ENCODE measurements at regions of chr12 and their contacts with region 1.

Region 1: DNA sequence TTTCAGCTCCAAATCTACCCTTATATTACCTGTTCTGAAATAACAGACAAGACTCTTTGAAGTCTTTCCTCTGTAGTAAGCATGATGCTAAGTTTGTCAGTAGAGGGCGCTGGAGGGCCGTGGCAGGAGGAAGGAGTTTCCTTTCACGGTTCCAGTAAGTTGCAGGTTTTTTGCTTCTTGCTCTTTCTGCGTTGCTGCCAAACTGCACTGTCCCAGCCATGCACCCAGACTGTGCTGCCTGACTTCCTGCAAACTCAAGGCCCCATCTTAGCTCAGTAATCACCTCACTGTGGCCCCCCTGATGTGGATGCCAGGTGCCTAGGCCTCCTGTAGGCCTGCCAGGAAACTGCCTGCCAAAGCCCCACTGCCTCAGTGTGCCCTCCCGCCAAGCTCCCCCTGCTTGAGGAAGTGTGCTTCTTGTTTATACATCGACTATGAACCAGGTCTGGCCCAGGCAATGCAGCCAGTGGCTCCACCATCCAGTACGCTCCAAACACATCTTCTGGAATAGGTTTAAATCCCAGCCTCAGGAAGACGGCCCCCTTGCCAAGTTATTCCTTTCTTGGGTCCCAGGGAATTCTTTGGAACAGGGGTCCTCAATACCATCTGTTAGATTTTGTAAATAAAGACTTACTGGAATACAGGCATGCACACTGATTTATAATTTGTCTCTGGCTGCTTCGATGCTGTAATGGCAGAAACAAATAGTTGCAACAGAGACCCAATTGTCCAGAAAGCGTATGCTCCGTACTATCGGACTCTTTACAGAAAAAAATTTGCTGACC is 193.7 kb upstream of the LRIG3 start:
- DNase-seq: peak; percentile 85
- ATAC-seq: peak; percentile 85
- H3K4me3 Mint-ChIP-seq: peak overlapping the region; percentile 22
- H3K27ac Mint-ChIP-seq: no peak overlapping the region
- H3K4me1 Mint-ChIP-seq: peaks cover 7% of the 10 kb centered on the region
- H3K27me3 Mint-ChIP-seq: no peaks in the 10 kb centered on the region
- CTCF ChIP-seq: peak; percentile 87

Region 2: DNA sequence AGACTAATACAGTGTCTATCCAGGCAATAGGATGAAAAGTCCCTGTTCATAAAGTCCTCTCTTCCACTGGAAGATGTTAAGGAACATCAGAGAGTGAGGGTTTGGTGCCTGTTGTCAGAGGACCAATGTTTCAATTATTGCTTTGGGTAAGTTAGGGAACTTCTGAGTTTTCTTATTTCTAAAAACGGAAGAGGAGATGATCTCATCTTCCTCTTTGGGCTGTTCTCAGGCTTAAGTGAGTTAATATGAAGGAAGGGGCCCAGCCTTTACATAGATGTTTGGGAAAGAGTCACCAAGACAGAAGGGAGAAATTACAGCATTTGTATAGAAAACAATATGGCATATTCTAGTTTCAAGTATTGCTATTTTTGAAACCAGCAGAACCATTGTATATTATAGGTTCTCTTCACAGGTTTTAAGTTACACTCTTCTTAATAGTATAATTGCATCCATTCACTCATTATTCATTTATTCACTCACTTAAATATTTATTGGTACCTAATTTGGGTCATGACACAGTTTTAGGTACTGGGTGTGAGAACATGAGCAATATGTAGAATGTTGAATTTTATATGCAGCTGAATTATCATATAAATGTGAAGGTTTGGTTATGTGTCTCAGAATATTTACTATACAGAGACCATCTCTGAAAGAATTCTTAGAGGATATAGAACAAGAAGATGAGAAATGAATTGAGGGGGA is 125.2 kb before region 1 on chr12:
- CTCF ChIA-PET with region 1: no interaction called
- POLR2A ChIA-PET with region 1: no interaction called
- DNase-seq: no peak
- ATAC-seq: no peak
- H3K4me3 Mint-ChIP-seq: no peak overlapping the region
- H3K27ac Mint-ChIP-seq: no peak overlapping the region
- H3K4me1 Mint-ChIP-seq: no peaks in the 10 kb centered on the region
- H3K27me3 Mint-ChIP-seq: no peaks in the 10 kb centered on the region
- CTCF ChIP-seq: no peak

Region 3: DNA sequence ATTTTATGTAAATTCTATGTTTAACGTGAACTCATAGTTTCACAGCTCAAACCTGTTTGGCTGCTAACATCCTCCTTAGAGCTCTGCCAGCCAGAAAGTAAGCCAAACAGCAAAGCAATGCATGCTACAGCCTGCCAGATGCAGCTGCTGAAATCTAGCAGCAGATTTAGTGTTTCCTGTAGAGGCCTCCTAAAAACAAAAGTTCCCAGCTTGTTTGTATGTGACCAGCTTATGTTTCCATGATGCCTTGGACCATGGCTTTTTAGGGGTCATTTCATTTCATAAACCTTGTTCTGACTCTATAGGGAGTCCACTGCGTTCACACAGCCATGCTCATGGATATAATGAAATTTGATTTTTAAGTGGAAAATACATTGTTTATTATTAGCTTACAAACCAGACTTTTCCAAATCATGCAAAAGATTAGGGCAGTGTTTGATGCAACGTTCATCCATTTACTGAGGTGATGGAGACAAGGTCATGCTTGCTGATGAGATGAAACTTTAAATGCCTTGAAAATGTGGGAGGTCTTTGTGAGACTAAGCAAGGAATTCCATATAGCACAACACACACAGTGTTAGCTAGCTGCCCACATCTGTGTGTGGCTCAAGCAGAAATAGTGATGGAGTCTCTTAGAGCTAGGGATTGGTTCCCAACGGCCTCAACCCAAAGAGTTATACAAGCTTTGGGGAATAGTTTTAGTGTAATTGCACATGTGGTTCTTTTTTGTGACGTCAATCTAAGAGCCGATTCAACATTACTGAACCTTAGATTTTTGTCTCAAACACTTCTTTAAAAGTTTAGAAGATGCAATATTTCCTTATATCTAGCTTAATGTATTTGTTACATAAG is 36.2 kb before region 1 on chr12:
- CTCF ChIA-PET with region 1: interaction called, 12 read pairs
- POLR2A ChIA-PET with region 1: no interaction called
- DNase-seq: no peak
- ATAC-seq: no peak
- H3K4me3 Mint-ChIP-seq: no peak overlapping the region
- H3K27ac Mint-ChIP-seq: no peak overlapping the region
- H3K4me1 Mint-ChIP-seq: no peaks in the 10 kb centered on the region
- H3K27me3 Mint-ChIP-seq: no peaks in the 10 kb centered on the region
- CTCF ChIP-seq: no peak

Region 4: GRCh38 chr12:59149997-59150642 is 36.1 kb after region 1 on chr12:
- CTCF ChIA-PET with region 1: interaction called, 42 read pairs
- POLR2A ChIA-PET with region 1: no interaction called
- DNase-seq: no peak
- ATAC-seq: peak; percentile 94
- H3K4me3 Mint-ChIP-seq: no peak overlapping the region
- H3K27ac Mint-ChIP-seq: no peak overlapping the region
- H3K4me1 Mint-ChIP-seq: peaks cover 9% of the 10 kb centered on the region
- H3K27me3 Mint-ChIP-seq: no peaks in the 10 kb centered on the region
- CTCF ChIP-seq: peak; percentile 73

Region 5: DNA sequence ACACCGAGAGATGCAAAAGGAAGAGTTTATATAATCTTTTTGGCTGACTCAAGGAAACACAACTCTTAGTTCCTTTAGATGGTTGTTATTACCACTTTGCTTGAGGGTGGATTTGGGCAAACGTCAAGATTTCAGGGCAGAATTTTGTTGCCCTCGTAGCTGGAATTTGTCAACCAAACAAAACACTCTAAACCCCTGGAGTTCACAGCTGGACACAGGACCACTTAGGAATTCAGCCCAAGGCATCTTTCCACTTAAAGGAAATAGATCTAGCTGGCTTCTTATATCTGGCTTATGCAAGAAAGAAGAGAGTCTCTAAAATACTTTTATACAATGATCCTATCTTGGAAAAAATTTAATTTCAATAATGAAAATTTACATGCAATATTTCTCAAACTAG is 44.0 kb after region 1 on chr12:
- CTCF ChIA-PET with region 1: interaction called, 42 read pairs
- POLR2A ChIA-PET with region 1: no interaction called
- DNase-seq: no peak
- ATAC-seq: peak; percentile 38; the same call in 1 of the 2 replicates
- H3K4me3 Mint-ChIP-seq: no peak overlapping the region
- H3K27ac Mint-ChIP-seq: no peak overlapping the region
- H3K4me1 Mint-ChIP-seq: peaks cover 12% of the 10 kb centered on the region
- H3K27me3 Mint-ChIP-seq: no peaks in the 10 kb centered on the region
- CTCF ChIP-seq: no peak

Region 6: DNA sequence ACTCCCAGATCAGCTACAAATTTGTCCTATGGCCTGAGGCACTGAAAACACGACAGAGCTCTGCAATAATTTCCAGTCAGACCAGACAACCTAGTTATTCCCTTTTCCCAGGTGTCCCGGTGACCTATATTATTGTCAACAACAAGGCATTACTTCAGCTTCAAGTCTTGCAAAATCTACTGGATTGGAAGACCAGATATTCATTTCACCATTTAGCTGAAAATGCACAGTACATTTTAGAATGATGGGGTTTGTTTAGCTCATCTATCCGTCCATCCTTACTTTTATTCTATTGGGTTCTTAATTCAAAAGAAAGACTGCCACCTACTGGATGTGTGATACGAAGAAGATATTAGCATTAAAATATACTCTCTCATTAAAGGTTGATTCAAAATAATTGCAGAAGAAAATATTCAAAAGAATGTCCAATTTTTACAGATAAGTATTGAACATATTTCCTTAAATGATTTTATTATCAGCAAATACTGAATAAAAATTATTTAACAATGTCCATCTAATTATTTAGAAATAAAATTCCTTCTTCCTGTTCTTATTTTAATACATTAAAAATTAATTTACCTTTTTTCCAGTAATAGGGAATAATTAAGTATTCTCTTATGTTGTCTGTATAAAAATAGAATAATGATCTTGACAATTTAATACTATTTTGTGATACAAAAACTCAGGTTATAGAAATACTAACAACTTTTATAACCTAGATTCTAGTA is 51.1 kb after region 1 on chr12:
- CTCF ChIA-PET with region 1: interaction called, 18 read pairs
- POLR2A ChIA-PET with region 1: no interaction called
- DNase-seq: no peak
- ATAC-seq: no peak
- H3K4me3 Mint-ChIP-seq: no peak overlapping the region
- H3K27ac Mint-ChIP-seq: no peak overlapping the region
- H3K4me1 Mint-ChIP-seq: 0 out of 2 replicates have a peak, but pooled peaks cover 2% of the 10 kb centered on the region
- H3K27me3 Mint-ChIP-seq: no peaks in the 10 kb centered on the region
- CTCF ChIP-seq: 0 out of 2 replicates have a peak, but pooled peaks have one; percentile 16

Measured in WTC11 (cell line).